CD4-positive, alpha-beta memory T cell (primary cell): ENCODE measurements at regions of chr16 and their contacts with region 1.

Region 1: GRCh38 chr16:85027349-85027957 is at the start of gene KIAA0513:
- DNase-seq: peak; percentile 91 to 98 (median 96)
- H3K4me3 ChIP-seq: peak within 1 kb of the TSS; percentile 58 to 82
- H3K4me3 Mint-ChIP-seq: peak within 1 kb of the TSS; percentile 88 to 98 (median 94)
- H3K27ac ChIP-seq: peak within 1 kb of the TSS; percentile 78
- H3K27ac Mint-ChIP-seq: peak within 1 kb of the TSS; percentile 92 to 98 (median 95)
- H3K4me1 ChIP-seq: peaks cover 28% of the 10 kb centered on the region
- H3K4me1 Mint-ChIP-seq: peaks cover 19 to 44% (median 26%) of the 10 kb centered on the region in 4 donors
- H3K27me3 ChIP-seq: no peaks in the 10 kb centered on the region
- H3K27me3 Mint-ChIP-seq: no peaks in the 10 kb centered on the region
- total RNA-seq, gene KIAA0513: 17.7 to 19.0 TPM

Region 2: DNA sequence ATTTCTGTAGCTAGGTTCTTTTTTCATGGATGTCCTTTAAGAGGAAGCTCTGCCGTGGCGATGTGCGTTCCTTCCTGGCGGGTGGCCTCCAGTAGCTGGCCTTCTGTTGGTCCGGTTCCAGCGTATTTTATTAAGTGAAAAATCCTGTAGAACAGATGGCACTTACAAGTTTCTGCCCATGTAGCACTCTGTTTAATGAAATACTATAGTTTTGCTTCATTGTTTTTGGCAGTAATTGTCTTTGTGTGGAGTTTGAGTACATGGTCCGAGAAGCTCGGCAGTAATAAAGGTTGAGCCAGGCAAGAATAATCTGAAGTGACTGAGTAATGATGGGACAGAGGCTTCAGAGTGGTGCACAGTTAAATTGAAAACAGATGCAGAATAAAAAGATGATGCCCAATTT is 307.3 kb before region 1 on chr16:
- CTCF ChIA-PET with region 1: no interaction called
- POLR2A ChIA-PET with region 1: no interaction called
- intact Hi-C with region 1: no loop called
- DNase-seq: no peak
- H3K4me3 ChIP-seq: no peak overlapping the region
- H3K4me3 Mint-ChIP-seq: no peak overlapping the region
- H3K27ac ChIP-seq: no peak overlapping the region
- H3K27ac Mint-ChIP-seq: no peak overlapping the region
- H3K4me1 ChIP-seq: peaks cover 26% of the 10 kb centered on the region
- H3K4me1 Mint-ChIP-seq: peaks cover 47 to 80% (median 69%) of the 10 kb centered on the region in 4 donors
- H3K27me3 ChIP-seq: no peaks in the 10 kb centered on the region
- H3K27me3 Mint-ChIP-seq: no peaks in the 10 kb centered on the region

Region 3: GRCh38 chr16:84738255-84739038 is 289.0 kb before region 1 on chr16:
- CTCF ChIA-PET with region 1: no interaction called
- POLR2A ChIA-PET with region 1: no interaction called
- intact Hi-C with region 1: loop called (anchors 2 kb)
- DNase-seq: peak; percentile 75 to 82 (median 78)
- H3K4me3 ChIP-seq: no peak overlapping the region
- H3K4me3 Mint-ChIP-seq: peak overlapping the region; percentile 27 to 80 (median 64)
- H3K27ac ChIP-seq: no peak overlapping the region
- H3K27ac Mint-ChIP-seq: peak overlapping the region; percentile 2 to 87 (median 80)
- H3K4me1 ChIP-seq: peaks cover 33% of the 10 kb centered on the region
- H3K4me1 Mint-ChIP-seq: peaks cover 36 to 53% (median 43%) of the 10 kb centered on the region in 4 donors
- H3K27me3 ChIP-seq: no peaks in the 10 kb centered on the region
- H3K27me3 Mint-ChIP-seq: no peaks in the 10 kb centered on the region

Region 4: DNA sequence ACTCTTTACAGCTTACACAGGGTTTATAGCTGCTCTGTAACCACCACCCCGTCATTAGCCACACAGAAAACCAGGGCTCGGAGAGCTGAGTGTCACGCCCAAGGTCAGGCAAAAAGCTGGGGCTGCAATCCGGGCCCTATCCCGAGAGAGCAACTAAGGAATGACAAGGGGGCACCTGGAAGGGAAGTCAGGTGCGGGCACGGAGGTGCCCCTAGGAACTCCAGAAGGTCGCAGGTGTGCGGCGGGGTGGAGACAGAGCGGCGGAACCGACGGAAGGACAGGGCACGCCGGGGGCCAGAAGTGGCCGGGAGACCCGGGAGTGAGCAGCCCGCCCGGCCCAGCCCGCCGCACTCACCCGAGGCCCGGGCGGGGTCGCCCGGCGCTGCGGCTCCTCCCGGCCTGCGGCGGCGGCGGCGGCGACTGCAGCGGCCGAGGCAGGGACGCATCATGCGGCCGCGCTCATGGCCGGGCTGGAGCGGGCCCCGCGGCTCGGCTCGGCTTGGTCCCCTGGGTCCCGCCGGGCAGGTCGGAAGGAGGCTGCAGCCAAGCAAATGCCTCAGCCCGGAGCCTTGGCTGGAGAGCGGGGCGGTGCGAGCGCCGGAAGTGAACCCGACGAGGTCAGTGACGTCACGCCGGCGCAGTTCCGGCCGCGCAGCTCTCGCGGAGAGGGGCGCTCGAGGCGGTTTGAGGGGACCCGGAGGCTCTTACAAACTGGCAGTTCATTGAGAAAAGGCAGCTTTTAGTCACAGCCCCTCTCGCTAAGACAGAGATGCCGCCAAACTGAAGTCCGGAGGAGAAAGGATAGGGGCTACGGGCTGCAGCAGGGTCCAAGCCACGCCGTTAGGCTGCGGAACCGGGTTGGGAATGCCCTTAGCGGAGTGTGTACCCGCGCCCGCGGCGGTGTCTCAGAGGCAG is 16.3 kb before region 1 on chr16 and contains the start of gene ZDHHC7:
- CTCF ChIA-PET with region 1: interaction called, 32 read pairs
- POLR2A ChIA-PET with region 1: interaction called, 74 read pairs
- intact Hi-C with region 1: loop called (anchors 1 kb)
- DNase-seq: peak; percentile 82 to 86 (median 84)
- H3K4me3 ChIP-seq: peak within 1 kb of the TSS; percentile 96 to 99
- H3K4me3 Mint-ChIP-seq: peak within 1 kb of the TSS; percentile 96 to 98 (median 98)
- H3K27ac ChIP-seq: peak within 1 kb of the TSS; percentile 93
- H3K27ac Mint-ChIP-seq: peak within 1 kb of the TSS; percentile 94 to 99 (median 99)
- H3K4me1 ChIP-seq: peaks cover 26% of the 10 kb centered on the region
- H3K4me1 Mint-ChIP-seq: peaks cover 22 to 51% (median 38%) of the 10 kb centered on the region in 4 donors
- H3K27me3 ChIP-seq: no peaks in the 10 kb centered on the region
- H3K27me3 Mint-ChIP-seq: peaks cover 0 to 2% of the 10 kb centered on the region in 2 donors
- total RNA-seq, gene ZDHHC7: 33.8 to 35.6 TPM

Region 5: GRCh38 chr16:85055503-85056210 is 28.2 kb after region 1 on chr16:
- CTCF ChIA-PET with region 1: interaction called, 7 read pairs
- POLR2A ChIA-PET with region 1: interaction called, 64 read pairs
- intact Hi-C with region 1: loop called (anchors 1 kb)
- DNase-seq: peak; percentile 81 to 94 (median 85)
- H3K4me3 ChIP-seq: peak overlapping the region; percentile 24 to 59
- H3K4me3 Mint-ChIP-seq: peak overlapping the region; percentile 71 to 92 (median 84)
- H3K27ac ChIP-seq: peak overlapping the region; percentile 57
- H3K27ac Mint-ChIP-seq: peak overlapping the region; percentile 84 to 98 (median 95)
- H3K4me1 ChIP-seq: peaks cover 43% of the 10 kb centered on the region
- H3K4me1 Mint-ChIP-seq: peaks cover 33 to 47% (median 39%) of the 10 kb centered on the region in 4 donors
- H3K27me3 ChIP-seq: no peaks in the 10 kb centered on the region
- H3K27me3 Mint-ChIP-seq: no peaks in the 10 kb centered on the region

Region 6: GRCh38 chr16:85554112-85554813 is 526.8 kb after region 1 on chr16:
- CTCF ChIA-PET with region 1: no interaction called
- POLR2A ChIA-PET with region 1: no interaction called
- intact Hi-C with region 1: loop called (anchors 10 kb)
- DNase-seq: peak; percentile 74 to 89 (median 75)
- H3K4me3 ChIP-seq: peak overlapping the region; percentile 65 to 76
- H3K4me3 Mint-ChIP-seq: peak overlapping the region; percentile 88 to 99 (median 94)
- H3K27ac ChIP-seq: peak overlapping the region; percentile 61
- H3K27ac Mint-ChIP-seq: peak overlapping the region; percentile 90 to 98 (median 96)
- H3K4me1 ChIP-seq: peaks cover 21% of the 10 kb centered on the region
- H3K4me1 Mint-ChIP-seq: peaks cover 17 to 43% (median 31%) of the 10 kb centered on the region in 4 donors
- H3K27me3 ChIP-seq: no peaks in the 10 kb centered on the region
- H3K27me3 Mint-ChIP-seq: peaks cover 0 to 1% of the 10 kb centered on the region in 2 donors